Ascending aorta (tissue), 2 donors: ENCODE measurements at regions of chrX and their contacts with region 1.

Region 1: DNA sequence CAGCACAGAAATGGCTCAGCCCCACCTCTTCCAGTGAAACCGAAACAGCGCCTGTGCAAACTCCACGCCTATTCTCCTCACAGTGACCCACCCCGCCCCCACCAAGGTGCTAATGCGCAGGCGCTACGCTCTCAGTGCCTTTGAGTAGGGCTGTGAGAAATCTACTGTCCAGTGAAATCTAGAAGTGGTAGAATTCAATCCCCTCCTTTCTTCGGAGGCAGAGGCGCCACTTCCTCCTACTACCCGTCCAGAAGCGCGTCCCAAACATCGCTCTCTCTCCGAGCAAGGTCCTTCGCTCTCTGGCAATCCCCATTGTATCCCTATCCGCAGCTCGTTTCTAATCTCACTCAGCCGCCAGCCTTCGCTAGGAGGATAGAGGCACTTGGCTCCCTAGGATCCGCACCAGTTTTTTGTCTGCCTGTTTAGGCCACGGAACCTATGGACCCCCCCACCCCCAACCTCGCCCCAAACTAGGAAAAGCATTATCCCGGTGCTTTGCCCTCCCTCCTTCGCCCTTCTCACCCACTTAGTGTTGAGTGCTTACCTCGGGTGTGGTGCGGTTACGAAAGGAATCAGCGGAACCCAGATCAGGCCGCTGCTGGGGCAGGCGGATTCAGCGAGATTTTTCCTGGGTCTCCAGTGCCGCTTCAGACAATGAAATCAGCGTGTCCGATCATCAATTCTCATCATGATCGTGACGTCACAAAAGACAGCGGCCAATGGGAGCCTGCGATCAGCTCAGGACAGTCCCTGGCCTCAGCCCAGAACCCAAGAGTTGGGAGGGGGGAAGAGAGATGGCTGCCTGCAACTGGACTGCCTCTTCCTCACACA is at the start of gene HDX:
- DNase-seq: peak; percentile 26 to 93
- H3K4me3 ChIP-seq: peak within 1 kb of the TSS; percentile 48 to 79
- H3K27ac ChIP-seq: peak within 1 kb of the TSS; percentile 82 to 96
- H3K4me1 ChIP-seq: no peaks in the 10 kb centered on the region
- H3K27me3 ChIP-seq: no peaks in the 10 kb centered on the region
- CTCF ChIP-seq: no peak
- total RNA-seq, gene HDX: 5.3 TPM

Region 2: DNA sequence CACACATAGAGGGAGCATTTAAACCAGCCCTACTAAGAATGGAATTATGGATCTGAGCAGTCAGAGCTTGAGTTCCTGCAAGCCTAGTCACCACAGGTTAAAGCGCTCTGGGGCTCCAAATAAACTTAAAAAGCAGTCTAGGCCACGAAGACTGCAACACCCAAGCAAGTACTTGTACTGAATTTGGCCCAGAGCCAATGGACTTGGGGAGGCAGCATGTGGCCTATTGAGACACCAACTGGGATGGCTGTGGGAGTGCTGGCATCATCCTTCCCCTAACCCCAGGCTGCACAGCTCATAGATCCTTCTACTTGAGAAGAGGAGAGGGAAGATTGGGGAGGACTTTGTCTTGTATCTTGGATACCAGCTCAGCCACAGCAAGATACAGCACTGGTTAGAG is 202.6 kb before region 1 on chrX:
- intact Hi-C with region 1: no loop called
- DNase-seq: no peak
- H3K4me3 ChIP-seq: no peak overlapping the region
- H3K27ac ChIP-seq: no peak overlapping the region
- H3K4me1 ChIP-seq: no peaks in the 10 kb centered on the region
- H3K27me3 ChIP-seq: no peaks in the 10 kb centered on the region
- CTCF ChIP-seq: no peak

Region 3: DNA sequence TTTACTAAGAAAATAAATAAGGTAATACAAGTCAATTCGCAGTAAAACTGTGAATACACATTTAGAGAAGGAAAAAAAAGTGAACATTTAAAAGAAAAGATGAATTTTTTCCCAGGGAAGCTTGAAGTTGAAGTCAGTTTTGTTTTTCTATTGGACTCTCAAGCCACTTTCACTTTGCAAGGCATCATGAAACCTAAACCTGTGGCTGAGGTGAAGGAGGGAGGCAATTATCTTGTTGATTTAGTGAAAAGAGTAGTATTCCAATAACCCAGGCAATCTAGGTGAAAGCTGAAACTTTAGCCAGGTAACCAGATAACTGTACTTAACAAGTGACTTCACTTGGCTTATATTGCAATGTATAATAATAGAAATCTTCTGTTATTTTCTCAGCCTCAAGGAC is 138.3 kb before region 1 on chrX:
- intact Hi-C with region 1: loop called (anchors 10 kb)
- DNase-seq: no peak
- H3K4me3 ChIP-seq: peak overlapping the region; percentile 21 to 39
- H3K27ac ChIP-seq: peak overlapping the region in 1 of 2 donors; percentile 4
- H3K4me1 ChIP-seq: no peaks in the 10 kb centered on the region
- H3K27me3 ChIP-seq: no peaks in the 10 kb centered on the region
- CTCF ChIP-seq: no peak